Ascending aorta (tissue), 2 donors: ENCODE measurements at regions of chr20 and their contacts with region 1.

Region 1: GRCh38 chr20:40668449-40669228 is 20.4 kb downstream of the MAFB start:
- DNase-seq: no peak
- H3K4me3 ChIP-seq: no peak overlapping the region
- H3K27ac ChIP-seq: no peak overlapping the region
- H3K4me1 ChIP-seq: no peaks in the 10 kb centered on the region
- H3K27me3 ChIP-seq: no peaks in the 10 kb centered on the region
- CTCF ChIP-seq: no peak

Region 2: GRCh38 chr20:40610730-40611129 is 57.9 kb before region 1 on chr20:
- intact Hi-C with region 1: loop called (anchors 5 kb)
- DNase-seq: no peak
- H3K4me3 ChIP-seq: no peak overlapping the region
- H3K27ac ChIP-seq: no peak overlapping the region
- H3K4me1 ChIP-seq: no peaks in the 10 kb centered on the region
- H3K27me3 ChIP-seq: no peaks in the 10 kb centered on the region
- CTCF ChIP-seq: no peak

Region 3: GRCh38 chr20:40728470-40728869 is 59.8 kb after region 1 on chr20:
- intact Hi-C with region 1: loop called (anchors 10 kb)
- DNase-seq: no peak
- H3K4me3 ChIP-seq: no peak overlapping the region
- H3K27ac ChIP-seq: no peak overlapping the region
- H3K4me1 ChIP-seq: no peaks in the 10 kb centered on the region
- H3K27me3 ChIP-seq: no peaks in the 10 kb centered on the region
- CTCF ChIP-seq: no peak